Vagina (tissue), 2 donors: ENCODE measurements at regions of chr22 and their contacts with region 1.

Region 1: DNA sequence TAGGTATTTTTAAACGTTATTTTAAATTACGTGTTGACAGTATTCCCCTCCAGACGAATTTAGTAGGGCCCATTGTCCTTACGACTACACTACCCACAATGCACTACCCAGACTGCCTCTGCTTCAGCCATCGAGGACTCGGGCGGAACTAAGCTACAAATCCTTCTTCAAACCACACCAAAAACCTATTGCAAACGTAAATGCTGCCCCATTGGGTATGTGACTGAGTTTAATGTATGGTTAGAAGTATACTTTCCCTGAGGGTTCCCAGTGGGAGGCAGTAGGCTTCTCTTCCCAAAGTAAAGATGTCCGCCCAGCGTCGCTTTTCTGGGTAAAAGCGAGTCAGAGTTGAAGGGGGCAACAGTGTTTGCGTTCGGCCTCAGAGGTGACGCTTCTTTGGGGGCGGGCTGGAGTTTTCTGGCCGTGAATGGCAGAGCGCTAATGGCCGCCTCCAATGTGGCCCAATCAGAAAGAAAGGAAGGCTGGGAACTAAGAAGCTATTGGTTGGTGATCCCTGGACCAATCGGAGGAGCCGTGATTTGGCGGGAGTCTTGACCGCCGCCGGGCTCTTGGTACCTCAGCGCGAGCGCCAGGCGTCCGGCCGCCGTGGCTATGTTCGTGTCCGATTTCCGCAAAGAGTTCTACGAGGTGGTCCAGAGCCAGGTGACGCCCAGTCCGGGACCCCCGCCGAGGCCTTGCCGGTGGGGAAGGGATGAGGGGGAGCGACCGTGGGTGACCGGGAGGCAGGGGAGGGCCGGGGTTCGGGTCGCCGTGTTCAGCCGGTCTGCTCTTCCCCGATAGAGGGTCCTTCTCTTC is at the start of gene CDC45:
- DNase-seq: peak in 1 of 2 donors; percentile 99
- H3K4me3 ChIP-seq: peak within 1 kb of the TSS; percentile 72 to 89
- H3K27ac ChIP-seq: peak within 1 kb of the TSS; percentile 93
- H3K4me1 ChIP-seq: peaks cover 31% of the 10 kb centered on the region
- H3K27me3 ChIP-seq: no peaks in the 10 kb centered on the region
- CTCF ChIP-seq: no peak
- POLR2A ChIP-seq: no peak
- total RNA-seq, gene CDC45: 0.74 TPM

Region 2: GRCh38 chr22:19419464-19420178 is 59.9 kb before region 1 on chr22:
- intact Hi-C with region 1: loop called (anchors 10 kb)
- DNase-seq: no peak
- H3K4me3 ChIP-seq: no peak overlapping the region
- H3K27ac ChIP-seq: no peak overlapping the region
- H3K4me1 ChIP-seq: peaks cover 5% of the 10 kb centered on the region
- H3K27me3 ChIP-seq: no peaks in the 10 kb centered on the region
- CTCF ChIP-seq: no peak
- POLR2A ChIP-seq: no peak

Region 3: DNA sequence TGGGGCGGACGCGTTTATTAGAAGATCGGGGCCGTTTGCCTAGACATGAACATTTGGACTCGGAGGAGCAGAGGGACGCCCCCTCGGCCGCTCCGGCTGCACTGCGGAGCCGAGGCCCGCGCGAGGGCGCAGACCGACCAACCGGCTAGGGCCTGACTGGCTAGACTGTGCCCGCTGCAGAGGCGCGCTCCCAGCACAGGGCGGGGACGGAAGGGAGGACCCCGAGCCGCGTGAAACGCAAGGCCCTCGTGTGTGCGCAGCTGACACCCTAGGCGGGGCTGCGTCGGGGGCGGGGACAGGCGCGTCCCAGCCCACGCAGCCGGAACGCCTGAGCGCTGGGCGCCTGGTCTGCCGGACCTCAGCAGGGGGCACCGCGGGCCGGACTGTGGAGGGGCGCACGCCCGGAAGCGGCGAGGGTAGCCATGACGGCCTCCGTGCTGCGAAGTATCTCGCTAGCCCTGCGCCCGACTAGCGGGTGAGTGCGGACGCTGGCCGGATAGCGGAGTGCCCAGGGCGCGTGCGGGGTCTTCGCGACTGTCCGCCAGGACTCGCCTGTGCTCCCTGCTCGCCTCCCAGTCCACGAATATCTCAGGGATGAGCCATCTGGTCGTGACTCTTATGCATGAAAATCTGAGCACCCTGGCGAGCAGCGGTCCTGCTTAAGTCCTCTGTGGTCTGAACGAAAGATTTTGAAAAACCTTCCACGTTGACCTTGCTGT is 47.3 kb before region 1 on chr22 and contains the start of gene MRPL40:
- intact Hi-C with region 1: loop called (anchors 2 kb)
- DNase-seq: no peak
- H3K4me3 ChIP-seq: peak within 1 kb of the TSS; percentile 81 to 93
- H3K27ac ChIP-seq: peak within 1 kb of the TSS; percentile 88
- H3K4me1 ChIP-seq: peaks cover 37% of the 10 kb centered on the region
- H3K27me3 ChIP-seq: no peaks in the 10 kb centered on the region
- CTCF ChIP-seq: no peak
- POLR2A ChIP-seq: peak in 1 of 2 donors; percentile 59
- total RNA-seq, gene MRPL40: 23.3 TPM